A673 (cell line): ENCODE measurements at regions of chr2 and their contacts with region 1.

Region 1: DNA sequence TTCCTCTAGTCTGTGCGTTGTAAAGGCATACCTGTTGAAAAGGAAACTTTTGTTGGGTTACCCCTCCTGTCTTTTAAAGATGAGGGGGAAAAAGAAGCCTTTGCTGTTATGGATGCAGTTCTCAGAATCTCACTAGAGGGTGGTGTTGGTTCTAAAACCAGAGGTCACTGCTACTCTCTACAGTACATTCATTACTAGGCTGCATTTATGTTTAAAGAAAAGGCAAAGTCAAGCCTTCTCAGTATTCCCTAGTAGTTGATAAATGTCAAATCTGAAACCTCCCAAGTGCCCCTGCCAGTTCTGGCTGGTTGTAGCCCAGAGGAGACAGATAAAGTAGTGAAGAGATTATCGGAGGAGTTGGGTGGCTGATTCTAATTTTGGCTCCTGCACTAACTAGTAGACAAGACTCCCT is 1.4 kb upstream of the PLCL1 start:
- DNase-seq: peak; percentile 61
- H3K4me3 ChIP-seq: no peak overlapping the region
- H3K27ac ChIP-seq: no peak overlapping the region
- H3K4me1 ChIP-seq: peaks cover 10% of the 10 kb centered on the region
- H3K27me3 ChIP-seq: peaks cover 34% of the 10 kb centered on the region
- CTCF ChIP-seq: peak; percentile 67

Region 2: DNA sequence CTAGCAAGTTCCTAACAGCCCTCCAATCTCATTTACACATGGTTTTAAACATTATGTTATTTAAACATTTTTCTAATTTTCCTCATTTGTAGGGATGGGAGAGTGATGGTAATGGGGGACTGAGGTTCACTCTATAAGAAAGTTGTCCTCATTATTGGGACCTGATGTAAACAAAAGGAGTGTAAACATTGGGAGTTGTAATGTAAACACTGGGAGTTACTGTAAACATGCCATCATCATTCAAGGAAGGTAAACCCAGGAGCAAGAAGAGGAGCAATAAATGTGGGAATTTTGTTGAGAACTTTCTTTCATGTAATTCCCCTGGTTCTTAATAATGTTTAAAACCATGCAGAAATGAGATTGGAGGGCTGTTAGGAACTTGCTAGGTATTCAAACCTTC is 145.5 kb before region 1 on chr2:
- CTCF ChIA-PET with region 1: no interaction called
- POLR2A ChIA-PET with region 1: no interaction called
- intact Hi-C with region 1: no loop called
- DNase-seq: no peak
- H3K4me3 ChIP-seq: no peak overlapping the region
- H3K27ac ChIP-seq: no peak overlapping the region
- H3K4me1 ChIP-seq: no peaks in the 10 kb centered on the region
- H3K27me3 ChIP-seq: no peaks in the 10 kb centered on the region
- CTCF ChIP-seq: no peak

Region 3: GRCh38 chr2:198053776-198054698 is 251.0 kb after region 1 on chr2:
- CTCF ChIA-PET with region 1: no interaction called
- POLR2A ChIA-PET with region 1: no interaction called
- intact Hi-C with region 1: loop called (anchors 1 kb)
- DNase-seq: peak; percentile 25
- H3K4me3 ChIP-seq: no peak overlapping the region
- H3K27ac ChIP-seq: no peak overlapping the region
- H3K4me1 ChIP-seq: no peaks in the 10 kb centered on the region
- H3K27me3 ChIP-seq: peaks cover 3% of the 10 kb centered on the region
- CTCF ChIP-seq: peak; percentile 51

Region 4: DNA sequence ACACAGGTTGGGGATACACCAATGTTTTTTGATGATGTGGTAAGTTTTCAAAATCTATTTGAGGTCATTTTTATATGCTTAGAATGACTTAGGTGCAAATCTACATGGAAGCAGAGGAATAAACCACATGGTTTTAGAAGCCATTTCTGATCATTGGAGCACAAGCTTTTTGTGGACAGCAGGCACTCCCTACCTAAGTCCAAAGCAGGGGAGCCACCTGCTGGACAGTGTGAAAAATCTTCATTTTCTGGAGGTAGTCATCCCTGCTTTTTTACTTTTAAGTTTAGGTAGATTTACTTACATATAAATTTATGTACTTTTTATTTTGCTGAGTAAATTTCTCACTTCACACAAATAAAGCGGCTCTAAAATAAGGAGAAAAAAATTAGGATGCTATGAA is 324.6 kb after region 1 on chr2:
- CTCF ChIA-PET with region 1: interaction called, 4 read pairs
- POLR2A ChIA-PET with region 1: no interaction called
- intact Hi-C with region 1: loop called (anchors 1 kb)
- DNase-seq: peak; percentile 64
- H3K4me3 ChIP-seq: no peak overlapping the region
- H3K27ac ChIP-seq: no peak overlapping the region
- H3K4me1 ChIP-seq: no peaks in the 10 kb centered on the region
- H3K27me3 ChIP-seq: peaks cover 13% of the 10 kb centered on the region
- CTCF ChIP-seq: peak; percentile 73